Activated CD4-positive, alpha-beta T cell treated with anti-CD3 and anti-CD28 coated beads, Interleukin-2, amount 10 ng/mL, durations not matched to agents 24 days and 14 days (primary cell): ENCODE measurements at regions of chr3 and their contacts with region 1.

Region 1: DNA sequence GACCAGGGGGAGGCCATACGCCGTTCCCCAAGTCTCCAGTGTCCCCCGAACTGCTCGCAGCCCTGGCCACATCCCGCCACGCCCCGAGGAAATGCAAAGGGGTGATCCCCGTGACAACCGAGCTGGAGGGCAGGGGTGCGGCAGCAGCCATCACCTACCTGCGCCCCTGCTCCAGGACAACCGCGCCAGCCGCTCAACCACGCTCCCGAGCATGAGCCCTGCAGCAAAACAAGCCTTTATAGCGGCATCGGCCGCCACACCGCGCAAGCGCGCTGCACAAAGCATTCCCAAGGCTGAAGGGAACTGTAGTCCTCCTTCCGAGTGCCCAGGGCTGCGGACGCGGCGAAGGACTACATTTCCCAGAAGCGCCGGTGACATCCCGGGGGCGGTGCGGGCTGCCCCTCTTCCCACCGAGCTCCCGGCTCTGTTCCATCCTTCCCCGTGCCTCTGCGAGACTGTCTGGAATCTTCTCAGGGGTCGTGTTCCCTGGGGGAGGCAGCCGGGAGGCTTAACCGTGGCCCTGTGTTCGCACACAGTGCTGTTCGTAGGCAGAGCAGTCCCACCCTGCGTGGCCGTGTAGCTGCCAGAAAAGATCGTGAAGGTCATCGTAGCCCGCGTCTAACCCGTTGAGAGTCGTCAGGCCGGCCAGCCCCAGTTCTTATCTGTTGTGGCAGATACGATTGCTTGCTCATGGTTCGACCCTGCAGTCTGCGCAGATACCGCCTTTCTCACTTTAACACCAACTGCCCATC is at the start of gene ABCC5:
- DNase-seq: peak; percentile 95
- H3K4me3 Mint-ChIP-seq: peak within 1 kb of the TSS; percentile 99
- H3K27ac Mint-ChIP-seq: peak within 1 kb of the TSS; percentile 90
- H3K4me1 Mint-ChIP-seq: peaks cover 28% of the 10 kb centered on the region
- H3K27me3 Mint-ChIP-seq: peaks cover 9% of the 10 kb centered on the region
- total RNA-seq, gene ABCC5: 19.7 and 22.1 TPM in 2 replicates

Region 2: DNA sequence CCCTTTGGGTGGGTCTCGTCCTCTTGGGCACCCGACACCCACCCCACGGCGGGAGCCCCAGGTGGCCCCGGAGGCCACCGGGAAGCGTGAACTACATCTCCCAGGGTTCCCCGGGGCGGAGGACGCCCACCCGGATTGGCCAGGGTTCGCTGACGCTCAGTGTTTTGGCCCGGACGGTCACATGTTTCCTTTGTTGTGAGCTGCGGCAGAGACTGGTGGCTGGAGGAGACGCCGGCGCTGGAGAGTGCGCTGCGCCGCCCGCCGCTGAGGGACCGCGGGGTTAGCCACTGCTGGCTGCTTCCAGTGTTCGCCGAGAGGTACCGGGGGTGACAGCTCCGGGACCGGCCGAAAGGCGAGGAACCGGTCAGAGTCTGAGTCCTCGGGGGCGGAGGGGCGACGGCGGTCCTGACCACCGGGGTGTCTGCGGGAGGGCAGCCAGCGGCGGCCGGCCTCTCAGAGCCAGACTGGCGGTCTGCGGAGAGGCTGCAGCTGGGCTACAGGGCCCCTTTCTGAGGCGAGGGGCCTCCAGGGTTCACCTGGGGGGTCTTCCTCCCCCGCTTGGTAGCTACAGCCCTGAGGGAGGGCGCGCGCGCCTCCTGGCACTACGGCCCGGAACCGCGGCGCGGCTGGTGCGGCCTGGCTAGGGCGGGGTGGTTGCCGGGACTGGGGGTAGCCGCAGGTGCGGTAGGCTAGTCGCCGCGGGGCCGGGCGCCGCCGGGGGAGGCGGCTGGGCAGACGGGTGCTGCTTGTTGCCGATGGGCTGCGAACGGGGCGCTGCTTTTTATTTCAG is 382.2 kb before region 1 on chr3 and contains the start of gene KLHL24:
- intact Hi-C with region 1: loop called (anchors 10 kb)
- DNase-seq: peak; percentile 97
- H3K4me3 Mint-ChIP-seq: peak within 1 kb of the TSS; percentile 94
- H3K27ac Mint-ChIP-seq: peak within 1 kb of the TSS; percentile 96
- H3K4me1 Mint-ChIP-seq: peaks cover 20% of the 10 kb centered on the region
- H3K27me3 Mint-ChIP-seq: no peaks in the 10 kb centered on the region
- total RNA-seq, gene KLHL24: 6.7 and 6.9 TPM in 2 replicates

Region 3: GRCh38 chr3:183895296-183895695 is 122.6 kb before region 1 on chr3:
- intact Hi-C with region 1: loop called (anchors 1 kb)
- DNase-seq: peak; percentile 83
- H3K4me3 Mint-ChIP-seq: no peak overlapping the region
- H3K27ac Mint-ChIP-seq: no peak overlapping the region
- H3K4me1 Mint-ChIP-seq: no peaks in the 10 kb centered on the region
- H3K27me3 Mint-ChIP-seq: peaks cover 17% of the 10 kb centered on the region

Region 4: GRCh38 chr3:184135149-184135910 is 117.5 kb after region 1 on chr3 and contains the start of gene EIF2B5:
- intact Hi-C with region 1: loop called (anchors 1 kb)
- DNase-seq: peak; percentile 96
- H3K4me3 Mint-ChIP-seq: peak within 1 kb of the TSS; percentile 97
- H3K27ac Mint-ChIP-seq: peak within 1 kb of the TSS; percentile 93
- H3K4me1 Mint-ChIP-seq: peaks cover 32% of the 10 kb centered on the region
- H3K27me3 Mint-ChIP-seq: peaks cover 5% of the 10 kb centered on the region
- total RNA-seq, gene EIF2B5: 72.2 and 74.7 TPM in 2 replicates

Region 5: GRCh38 chr3:184174646-184175492 is 157.0 kb after region 1 on chr3 and contains the start of gene AP2M1:
- intact Hi-C with region 1: loop called (anchors 1 kb)
- DNase-seq: peak; percentile 100
- H3K4me3 Mint-ChIP-seq: peak within 1 kb of the TSS; percentile 91
- H3K27ac Mint-ChIP-seq: peak within 1 kb of the TSS; percentile 81
- H3K4me1 Mint-ChIP-seq: peaks cover 26% of the 10 kb centered on the region
- H3K27me3 Mint-ChIP-seq: no peaks in the 10 kb centered on the region
- total RNA-seq, gene AP2M1: 241 and 242 TPM in 2 replicates

Region 6: DNA sequence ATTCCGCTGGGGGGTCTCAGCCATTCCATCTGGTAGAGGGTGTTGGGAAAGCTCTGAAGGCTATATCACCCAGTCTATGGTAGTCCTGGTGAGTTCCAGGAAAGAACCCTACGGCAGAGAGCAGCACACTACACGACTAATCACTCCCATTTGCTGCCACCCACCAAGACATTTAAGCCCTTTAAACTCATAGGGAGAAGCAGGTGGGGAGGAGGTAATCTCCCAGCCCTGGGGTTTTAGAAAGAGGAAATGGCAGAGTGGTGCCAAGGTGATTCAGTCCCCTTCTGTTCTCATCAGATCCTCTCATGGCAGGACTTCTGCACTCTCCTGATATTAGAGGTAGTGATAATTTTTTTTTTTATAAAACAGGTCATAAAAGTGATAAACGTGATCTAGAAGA is 201.0 kb after region 1 on chr3:
- intact Hi-C with region 1: no loop called
- DNase-seq: no peak
- H3K4me3 Mint-ChIP-seq: no peak overlapping the region
- H3K27ac Mint-ChIP-seq: no peak overlapping the region
- H3K4me1 Mint-ChIP-seq: no peaks in the 10 kb centered on the region
- H3K27me3 Mint-ChIP-seq: peaks cover 7% of the 10 kb centered on the region

Region 7: GRCh38 chr3:184298759-184299496 is 281.1 kb after region 1 on chr3 and contains the start of gene PSMD2:
- intact Hi-C with region 1: loop called (anchors 1 kb)
- DNase-seq: peak; percentile 98
- H3K4me3 Mint-ChIP-seq: peak within 1 kb of the TSS; percentile 99
- H3K27ac Mint-ChIP-seq: peak within 1 kb of the TSS; percentile 90
- H3K4me1 Mint-ChIP-seq: peaks cover 20% of the 10 kb centered on the region
- H3K27me3 Mint-ChIP-seq: peaks cover 6% of the 10 kb centered on the region
- total RNA-seq, gene PSMD2: 280 and 283 TPM in 2 replicates